CD8-positive, alpha-beta T cell (primary cell): ENCODE measurements at regions of chr7 and their contacts with region 1.

Region 1: GRCh38 chr7:101251871-101252659 is 7.2 kb upstream of the FIS1 start:
- DNase-seq: peak; percentile 97 to 100 (median 99)
- ATAC-seq: peak; percentile 98
- H3K4me3 ChIP-seq: peak overlapping the region; percentile 91 to 97
- H3K4me3 Mint-ChIP-seq: peak overlapping the region; percentile 96
- H3K27ac ChIP-seq: peak overlapping the region; percentile 80 to 86
- H3K27ac Mint-ChIP-seq: peak overlapping the region; percentile 96
- H3K4me1 ChIP-seq: peaks cover 17% of the 10 kb centered on the region
- H3K4me1 Mint-ChIP-seq: peaks cover 32% of the 10 kb centered on the region
- H3K27me3 ChIP-seq: no peaks in the 10 kb centered on the region
- H3K27me3 Mint-ChIP-seq: peaks cover 3% of the 10 kb centered on the region
- CTCF ChIP-seq: no peak

Region 2: DNA sequence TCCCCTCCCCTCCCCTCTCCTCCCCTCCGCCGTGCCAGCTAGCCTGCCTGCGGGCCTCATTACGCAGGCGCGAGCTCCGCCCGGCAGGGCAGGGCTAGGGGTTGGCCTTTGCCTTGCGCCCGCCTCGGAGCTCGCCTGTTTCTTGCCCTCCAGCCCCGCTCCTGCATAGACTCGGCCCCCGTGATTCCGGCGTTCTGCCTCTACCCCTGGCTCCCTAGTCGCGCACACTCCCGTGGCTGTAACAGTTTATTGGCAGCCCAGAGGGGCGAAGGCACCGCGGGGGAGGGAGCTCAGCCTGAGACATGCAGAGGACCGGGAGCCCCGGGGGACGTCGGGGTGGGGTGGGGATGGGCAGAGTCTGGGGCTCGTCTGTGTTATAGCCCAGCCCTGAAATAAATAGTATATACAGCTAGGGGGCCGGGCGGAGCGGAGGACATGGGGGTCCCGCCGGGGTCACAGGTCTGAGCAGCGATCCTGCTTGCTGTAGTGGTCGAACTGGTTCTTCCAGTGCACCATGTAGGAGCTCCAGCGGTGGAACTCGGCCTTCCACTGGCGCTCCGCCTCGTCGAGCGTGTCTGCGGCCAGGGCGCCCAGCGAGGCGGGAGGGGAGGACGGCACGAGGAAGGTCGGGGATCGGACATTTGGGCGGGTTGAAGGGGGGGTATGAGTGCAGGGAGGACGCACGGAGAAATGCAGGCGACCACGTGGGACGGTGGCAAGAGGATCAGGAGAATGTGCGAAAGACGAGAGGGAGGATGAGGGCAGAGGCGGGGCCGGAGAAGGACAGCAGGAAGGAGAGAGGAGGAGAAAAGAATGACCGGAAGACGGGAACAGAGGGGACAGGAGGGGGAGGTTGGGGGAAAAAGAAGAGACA is 362.1 kb before region 1 on chr7:
- CTCF ChIA-PET with region 1: no interaction called
- POLR2A ChIA-PET with region 1: interaction called, 3 read pairs
- intact Hi-C with region 1: loop called in 1 of 2 experiments (anchors 2 kb)
- DNase-seq: peak; percentile 79 to 97 (median 91)
- ATAC-seq: peak; percentile 82
- H3K4me3 ChIP-seq: peak overlapping the region; percentile 65 to 90
- H3K4me3 Mint-ChIP-seq: peak overlapping the region; percentile 87
- H3K27ac ChIP-seq: peak overlapping the region; percentile 22 to 44
- H3K27ac Mint-ChIP-seq: peak overlapping the region; percentile 72
- H3K4me1 ChIP-seq: peaks cover 40% of the 10 kb centered on the region
- H3K4me1 Mint-ChIP-seq: peaks cover 42% of the 10 kb centered on the region
- H3K27me3 ChIP-seq: peaks cover 0 to 20% of the 10 kb centered on the region in 2 experiments
- H3K27me3 Mint-ChIP-seq: peaks cover 13% of the 10 kb centered on the region
- CTCF ChIP-seq: no peak

Region 3: DNA sequence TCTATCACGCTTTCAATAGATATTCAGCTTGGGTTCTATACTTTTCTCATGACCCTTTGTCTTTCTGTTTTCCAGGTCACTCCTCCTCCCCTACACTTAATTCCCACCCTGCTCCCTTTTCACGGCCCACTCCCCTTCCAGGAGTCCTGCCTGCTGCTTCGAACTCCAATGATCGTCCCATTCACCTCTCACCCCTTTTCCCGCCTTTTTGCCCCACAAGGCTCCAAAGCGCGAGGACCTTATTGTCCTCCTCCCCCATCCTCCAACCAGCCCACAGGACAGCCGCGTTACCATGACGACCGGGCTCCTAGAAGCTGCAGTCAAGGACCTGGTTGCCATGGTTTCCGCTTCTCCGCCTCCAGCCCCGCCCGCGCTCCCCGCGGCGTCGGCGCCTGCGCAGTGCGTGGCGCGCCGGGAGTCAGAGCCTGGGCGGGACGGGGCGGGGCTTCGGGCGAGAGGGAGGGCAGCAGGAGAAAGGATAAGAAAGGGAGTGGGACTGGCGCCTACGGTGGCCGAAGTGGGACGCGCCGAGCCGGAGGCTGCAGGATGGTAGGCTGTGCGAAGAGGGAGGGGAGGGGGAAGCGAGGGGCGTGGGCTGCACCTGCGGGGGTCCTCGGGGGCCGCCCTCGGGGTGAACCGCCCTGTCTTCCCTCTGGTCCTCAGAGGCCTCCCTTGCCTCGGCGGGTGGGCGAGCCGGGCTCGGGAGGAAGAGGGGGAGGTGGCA is 97.9 kb before region 1 on chr7 and contains the start of gene AP1S1:
- CTCF ChIA-PET with region 1: no interaction called
- POLR2A ChIA-PET with region 1: no interaction called
- intact Hi-C with region 1: loop called in 1 of 2 experiments (anchors 1 kb)
- DNase-seq: peak; percentile 76 to 96 (median 87)
- ATAC-seq: peak; percentile 88
- H3K4me3 ChIP-seq: peak within 1 kb of the TSS; percentile 61 to 77
- H3K4me3 Mint-ChIP-seq: peak within 1 kb of the TSS; percentile 88
- H3K27ac ChIP-seq: no peak within 1 kb of the TSS
- H3K27ac Mint-ChIP-seq: peak within 1 kb of the TSS; percentile 47
- H3K4me1 ChIP-seq: peaks cover 12% of the 10 kb centered on the region
- H3K4me1 Mint-ChIP-seq: peaks cover 11% of the 10 kb centered on the region
- H3K27me3 ChIP-seq: no peaks in the 10 kb centered on the region
- H3K27me3 Mint-ChIP-seq: peaks cover 9% of the 10 kb centered on the region
- CTCF ChIP-seq: no peak
- total RNA-seq, gene AP1S1: 2.1 to 2.2 TPM

Region 4: GRCh38 chr7:101217388-101218235 is 34.5 kb before region 1 on chr7 and contains the starts of genes PLOD3 and ZNHIT1:
- CTCF ChIA-PET with region 1: interaction called, 6 read pairs
- POLR2A ChIA-PET with region 1: interaction called, 12 read pairs
- intact Hi-C with region 1: loop called (anchors 1 kb)
- DNase-seq: peak; percentile 89 to 99 (median 96)
- ATAC-seq: peak; percentile 75
- H3K4me3 ChIP-seq: peak within 1 kb of the TSS; percentile 82 to 91
- H3K4me3 Mint-ChIP-seq: peak within 1 kb of the TSS; percentile 94
- H3K27ac ChIP-seq: peak within 1 kb of the TSS; percentile 71 to 84
- H3K27ac Mint-ChIP-seq: peak within 1 kb of the TSS; percentile 91
- H3K4me1 ChIP-seq: peaks cover 29% of the 10 kb centered on the region
- H3K4me1 Mint-ChIP-seq: peaks cover 33% of the 10 kb centered on the region
- H3K27me3 ChIP-seq: no peaks in the 10 kb centered on the region
- H3K27me3 Mint-ChIP-seq: no peaks in the 10 kb centered on the region
- CTCF ChIP-seq: no peak
- total RNA-seq, gene PLOD3: 6.6 to 7.5 TPM
- total RNA-seq, gene ZNHIT1: 23.7 to 24.6 TPM

Region 5: GRCh38 chr7:101287032-101287431 is 35.0 kb after region 1 on chr7:
- CTCF ChIA-PET with region 1: interaction called, 21 read pairs
- POLR2A ChIA-PET with region 1: no interaction called
- intact Hi-C with region 1: no loop called
- DNase-seq: no peak
- ATAC-seq: no peak
- H3K4me3 ChIP-seq: no peak overlapping the region
- H3K4me3 Mint-ChIP-seq: no peak overlapping the region
- H3K27ac ChIP-seq: no peak overlapping the region
- H3K27ac Mint-ChIP-seq: no peak overlapping the region
- H3K4me1 ChIP-seq: peaks cover 4% of the 10 kb centered on the region
- H3K4me1 Mint-ChIP-seq: peaks cover 24% of the 10 kb centered on the region
- H3K27me3 ChIP-seq: peaks cover 0 to 2% of the 10 kb centered on the region in 2 experiments
- H3K27me3 Mint-ChIP-seq: peaks cover 9% of the 10 kb centered on the region
- CTCF ChIP-seq: no peak

Region 6: DNA sequence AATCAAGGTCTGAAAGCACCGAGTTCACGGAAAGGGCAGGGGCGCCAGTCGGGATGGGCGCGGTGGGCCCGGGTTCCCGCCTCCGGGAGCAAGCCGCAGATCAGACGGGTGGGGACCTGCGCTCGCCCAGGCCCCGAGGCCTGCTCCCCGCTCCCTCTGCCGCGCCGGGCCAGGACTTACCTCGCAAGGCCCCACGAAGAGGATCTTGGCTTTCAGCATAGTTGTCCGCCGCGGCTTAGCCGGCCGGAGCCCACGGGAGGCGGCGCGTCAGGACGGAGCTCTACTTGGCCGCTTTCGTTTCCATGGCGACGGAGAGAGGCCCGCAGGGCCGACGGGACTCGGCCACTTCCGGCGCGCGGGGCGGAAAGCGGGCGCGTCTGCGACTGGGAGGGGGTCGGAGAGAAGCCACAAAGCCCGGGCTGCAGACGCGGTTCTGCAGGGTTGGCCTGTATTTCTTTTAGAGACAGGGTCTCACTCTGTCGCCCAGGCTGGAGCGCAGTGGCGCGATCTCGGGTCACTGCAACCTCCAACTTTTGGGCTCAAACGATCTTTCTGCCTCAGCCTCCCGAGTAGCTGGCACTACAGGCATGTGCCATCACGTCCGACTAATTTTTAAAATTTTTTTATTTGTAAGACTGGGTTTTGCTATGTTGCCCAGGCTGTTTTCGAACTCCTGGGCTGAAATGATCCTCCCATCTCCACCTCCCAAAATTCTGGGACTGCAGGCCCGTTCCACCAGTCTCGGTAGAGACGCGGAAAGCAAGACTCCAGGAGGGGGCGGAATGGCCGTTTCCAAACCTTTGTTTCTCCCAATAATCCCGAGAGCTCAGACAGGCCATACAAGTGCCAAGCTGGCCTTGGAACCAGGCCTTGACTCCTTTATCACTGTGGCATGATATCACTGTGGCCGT is 69.7 kb after region 1 on chr7 and contains the start of gene IFT22:
- CTCF ChIA-PET with region 1: no interaction called
- POLR2A ChIA-PET with region 1: no interaction called
- intact Hi-C with region 1: loop called in 1 of 2 experiments (anchors 1 kb)
- DNase-seq: peak; percentile 60 to 90 (median 85)
- ATAC-seq: peak; percentile 92
- H3K4me3 ChIP-seq: peak within 1 kb of the TSS; percentile 67 to 97
- H3K4me3 Mint-ChIP-seq: peak within 1 kb of the TSS; percentile 90
- H3K27ac ChIP-seq: peak within 1 kb of the TSS; percentile 49 to 68
- H3K27ac Mint-ChIP-seq: peak within 1 kb of the TSS; percentile 90
- H3K4me1 ChIP-seq: peaks cover 16% of the 10 kb centered on the region
- H3K4me1 Mint-ChIP-seq: peaks cover 14% of the 10 kb centered on the region
- H3K27me3 ChIP-seq: no peaks in the 10 kb centered on the region
- H3K27me3 Mint-ChIP-seq: no peaks in the 10 kb centered on the region
- CTCF ChIP-seq: no peak
- total RNA-seq, gene IFT22: 2.3 to 3.5 TPM